MCF 10A (cell line): ENCODE measurements at regions of chr2 and their contacts with region 1.

Region 1: GRCh38 chr2:38581193-38582147 is 21.3 kb downstream of the HNRNPLL start:
- DNase-seq: peak; percentile 77
- H3K4me3 Mint-ChIP-seq: no peak overlapping the region
- H3K27ac Mint-ChIP-seq: no peak overlapping the region
- H3K4me1 Mint-ChIP-seq: peaks cover 5% of the 10 kb centered on the region
- H3K27me3 Mint-ChIP-seq: no peaks in the 10 kb centered on the region
- CTCF ChIP-seq: peak; percentile 56

Region 2: GRCh38 chr2:38498045-38498481 is 83.4 kb before region 1 on chr2:
- CTCF ChIA-PET with region 1: no interaction called
- POLR2A ChIA-PET with region 1: no interaction called
- intact Hi-C with region 1: no loop called
- DNase-seq: no peak
- H3K4me3 Mint-ChIP-seq: no peak overlapping the region
- H3K27ac Mint-ChIP-seq: no peak overlapping the region
- H3K4me1 Mint-ChIP-seq: no peaks in the 10 kb centered on the region
- H3K27me3 Mint-ChIP-seq: no peaks in the 10 kb centered on the region
- CTCF ChIP-seq: no peak

Region 3: GRCh38 chr2:38565333-38565732 is 16.1 kb before region 1 on chr2:
- CTCF ChIA-PET with region 1: interaction called, 22 read pairs
- POLR2A ChIA-PET with region 1: interaction called, 4 read pairs
- intact Hi-C with region 1: no loop called
- DNase-seq: no peak
- H3K4me3 Mint-ChIP-seq: no peak overlapping the region
- H3K27ac Mint-ChIP-seq: no peak overlapping the region
- H3K4me1 Mint-ChIP-seq: no peaks in the 10 kb centered on the region
- H3K27me3 Mint-ChIP-seq: no peaks in the 10 kb centered on the region
- CTCF ChIP-seq: no peak

Region 4: GRCh38 chr2:38720613-38721241 is 139.3 kb after region 1 on chr2:
- CTCF ChIA-PET with region 1: interaction called, 156 read pairs
- POLR2A ChIA-PET with region 1: interaction called, 6 read pairs
- intact Hi-C with region 1: no loop called
- DNase-seq: peak; percentile 97
- H3K4me3 Mint-ChIP-seq: no peak overlapping the region
- H3K27ac Mint-ChIP-seq: peak overlapping the region; percentile 36
- H3K4me1 Mint-ChIP-seq: peaks cover 19% of the 10 kb centered on the region
- H3K27me3 Mint-ChIP-seq: no peaks in the 10 kb centered on the region
- CTCF ChIP-seq: no peak

Region 5: GRCh38 chr2:38734299-38735058 is 153.0 kb after region 1 on chr2:
- CTCF ChIA-PET with region 1: interaction called, 156 read pairs
- POLR2A ChIA-PET with region 1: interaction called, 3 read pairs
- intact Hi-C with region 1: no loop called
- DNase-seq: no peak
- H3K4me3 Mint-ChIP-seq: no peak overlapping the region
- H3K27ac Mint-ChIP-seq: no peak overlapping the region
- H3K4me1 Mint-ChIP-seq: peaks cover 5% of the 10 kb centered on the region
- H3K27me3 Mint-ChIP-seq: no peaks in the 10 kb centered on the region
- CTCF ChIP-seq: no peak

Region 6: DNA sequence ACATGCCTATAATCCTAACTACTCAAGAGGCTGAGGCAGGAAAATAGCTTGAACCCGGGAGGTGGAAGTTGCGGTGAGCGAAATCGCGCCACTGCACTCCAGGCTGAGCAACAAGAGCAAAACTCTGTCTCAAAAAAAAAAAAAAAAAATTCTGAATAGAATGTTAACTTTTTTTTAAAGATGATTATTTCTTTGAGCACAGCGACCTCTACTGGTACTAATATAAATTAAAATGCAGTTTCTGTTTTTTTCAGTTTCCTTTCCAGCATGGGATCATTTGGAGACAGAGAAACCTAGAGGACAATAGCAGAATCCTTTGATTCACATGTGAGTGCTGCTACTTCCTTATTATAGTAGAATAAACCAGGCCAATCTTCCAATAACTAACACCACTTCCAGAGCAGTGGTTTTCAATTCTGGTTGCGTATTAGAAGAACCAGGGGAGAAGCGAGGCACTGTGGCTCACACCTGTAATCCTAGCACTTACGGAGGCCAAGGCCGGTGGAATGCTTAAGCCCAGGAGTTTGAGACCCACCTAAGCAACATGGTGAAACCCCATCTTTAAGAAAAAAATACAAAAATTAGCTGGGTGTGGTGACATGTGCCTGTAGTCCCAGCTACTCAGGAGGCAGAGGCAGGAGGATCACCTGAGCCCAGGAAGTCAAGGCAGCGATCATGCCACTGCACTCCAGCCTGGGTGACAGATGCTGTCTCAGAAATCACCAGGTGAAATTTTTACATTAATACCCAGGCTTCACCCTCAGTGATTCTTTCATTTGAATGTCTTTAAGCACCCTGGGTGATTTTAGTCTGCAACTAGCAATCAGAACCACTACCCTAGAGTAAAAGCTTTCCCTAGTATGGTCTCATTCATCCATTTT is 159.6 kb after region 1 on chr2:
- CTCF ChIA-PET with region 1: interaction called, 21 read pairs
- POLR2A ChIA-PET with region 1: interaction called, 5 read pairs
- intact Hi-C with region 1: no loop called
- DNase-seq: peak; percentile 33
- H3K4me3 Mint-ChIP-seq: no peak overlapping the region
- H3K27ac Mint-ChIP-seq: no peak overlapping the region
- H3K4me1 Mint-ChIP-seq: peaks cover 5% of the 10 kb centered on the region
- H3K27me3 Mint-ChIP-seq: no peaks in the 10 kb centered on the region
- CTCF ChIP-seq: peak; percentile 45